PC-9 (cell line): ENCODE measurements at regions of chr11 and their contacts with region 1.

Region 1: GRCh38 chr11:9003573-9004309 is at the start of gene NRIP3:
- DNase-seq: peak in 1 of 2 experiments; percentile 38
- H3K4me3 ChIP-seq: peak within 1 kb of the TSS; percentile 35; the same call in 1 of the 2 replicates
- H3K27ac ChIP-seq: no peak within 1 kb of the TSS
- H3K4me1 ChIP-seq: no peaks in the 10 kb centered on the region
- H3K27me3 ChIP-seq: peaks cover 20% of the 10 kb centered on the region
- CTCF ChIP-seq: no peak
- total RNA-seq, gene NRIP3: 1.1 and 2.1 TPM in 2 replicates

Region 2: GRCh38 chr11:8886322-8886721 is 117.4 kb before region 1 on chr11:
- CTCF ChIA-PET with region 1: no interaction called
- POLR2A ChIA-PET with region 1: no interaction called
- intact Hi-C with region 1: no loop called
- DNase-seq: no peak
- H3K4me3 ChIP-seq: no peak overlapping the region
- H3K27ac ChIP-seq: no peak overlapping the region
- H3K4me1 ChIP-seq: no peaks in the 10 kb centered on the region
- H3K27me3 ChIP-seq: no peaks in the 10 kb centered on the region
- CTCF ChIP-seq: no peak

Region 3: DNA sequence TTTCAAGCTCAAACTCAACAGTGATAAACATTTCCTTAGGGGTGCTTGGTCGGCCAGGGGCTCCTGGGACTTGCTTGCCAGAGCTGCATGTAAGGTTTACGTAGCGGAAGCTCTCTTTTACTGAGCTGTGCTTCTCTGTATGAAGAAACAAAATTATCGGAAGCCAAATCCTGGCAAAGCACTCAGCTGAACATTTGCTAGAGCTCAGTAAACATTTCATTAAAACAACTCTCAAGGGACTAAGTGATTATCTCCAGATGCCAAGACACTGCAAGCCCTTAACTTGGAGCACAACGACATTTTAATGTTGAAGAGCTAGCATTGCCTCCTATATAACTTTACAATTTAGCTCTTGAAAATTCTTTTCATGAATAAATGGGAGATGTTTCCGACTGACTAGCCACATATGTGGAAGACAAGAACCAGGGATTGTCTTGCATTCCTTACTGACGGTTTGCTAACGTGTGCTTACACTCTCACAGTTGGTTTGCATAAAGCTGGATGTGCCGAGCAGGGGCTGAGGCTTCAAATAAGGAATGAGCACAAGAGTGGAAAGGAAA is 44.3 kb after region 1 on chr11:
- CTCF ChIA-PET with region 1: no interaction called
- POLR2A ChIA-PET with region 1: no interaction called
- intact Hi-C with region 1: no loop called
- DNase-seq: no peak
- H3K4me3 ChIP-seq: no peak overlapping the region
- H3K27ac ChIP-seq: no peak overlapping the region
- H3K4me1 ChIP-seq: no peaks in the 10 kb centered on the region
- H3K27me3 ChIP-seq: no peaks in the 10 kb centered on the region
- CTCF ChIP-seq: no peak

Region 4: GRCh38 chr11:9379046-9379445 is 375.3 kb after region 1 on chr11:
- CTCF ChIA-PET with region 1: interaction called, 18 read pairs
- POLR2A ChIA-PET with region 1: no interaction called
- intact Hi-C with region 1: no loop called
- DNase-seq: no peak
- H3K4me3 ChIP-seq: no peak overlapping the region
- H3K27ac ChIP-seq: no peak overlapping the region
- H3K4me1 ChIP-seq: 0 out of 2 replicates have a peak, but pooled peaks cover 4% of the 10 kb centered on the region
- H3K27me3 ChIP-seq: no peaks in the 10 kb centered on the region
- CTCF ChIP-seq: no peak

Region 5: GRCh38 chr11:9428706-9429105 is 425.0 kb after region 1 on chr11:
- CTCF ChIA-PET with region 1: no interaction called
- POLR2A ChIA-PET with region 1: no interaction called
- intact Hi-C with region 1: no loop called
- DNase-seq: no peak
- H3K4me3 ChIP-seq: no peak overlapping the region
- H3K27ac ChIP-seq: no peak overlapping the region
- H3K4me1 ChIP-seq: no peaks in the 10 kb centered on the region
- H3K27me3 ChIP-seq: no peaks in the 10 kb centered on the region
- CTCF ChIP-seq: no peak